ENCODE measurements at regions of chr3 and their contacts with region 1.

Region 1: DNA sequence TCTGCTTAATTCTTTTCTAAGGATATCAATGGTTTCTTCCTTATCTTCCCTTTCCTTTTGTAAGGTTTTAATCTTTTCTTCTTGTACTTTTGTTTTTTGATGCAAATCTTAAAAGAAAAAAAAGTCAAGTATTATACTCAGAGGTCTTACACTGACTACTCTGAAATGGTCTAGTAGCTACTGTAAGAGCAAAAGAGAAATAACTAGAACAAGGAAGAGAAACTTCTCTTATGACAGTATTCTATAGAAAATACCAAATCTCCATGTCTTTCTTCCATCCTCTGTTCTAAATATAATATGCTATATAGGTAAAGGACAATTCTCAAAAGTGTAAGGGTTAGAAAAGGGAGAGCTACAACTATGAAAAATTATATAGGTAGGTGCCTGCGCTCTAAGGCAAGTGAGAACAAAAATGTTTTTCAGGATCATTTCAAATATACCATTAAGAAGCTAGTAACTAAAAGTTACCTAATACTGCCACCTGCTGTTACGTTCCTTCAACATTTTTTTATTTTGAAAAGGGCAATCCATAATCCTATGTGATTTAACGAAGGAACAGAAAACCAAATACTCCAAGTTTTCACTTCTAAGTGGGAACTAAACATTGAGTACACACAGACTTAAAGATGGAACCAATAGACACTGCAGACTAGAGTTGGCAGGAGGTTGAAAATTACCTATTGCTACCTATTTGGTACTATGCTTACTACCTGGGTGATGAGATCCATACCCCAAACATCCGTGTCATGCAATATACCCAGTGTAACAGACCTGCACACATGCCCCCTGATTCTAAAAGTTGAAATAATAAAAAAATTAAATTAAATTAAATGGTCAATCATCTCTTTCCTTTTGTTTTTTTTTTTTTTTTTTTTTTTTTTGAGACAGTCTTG is 36.7 kb downstream of the CIP2A start:
- DNase-seq: no peak
- H3K4me3 ChIP-seq: no peak overlapping the region
- CTCF ChIP-seq: no peak
- POLR2A ChIP-seq: no peak

Region 2: GRCh38 chr3:108489771-108490170 is 62.7 kb before region 1 on chr3:
- intact Hi-C with region 1: loop called (anchors 5 kb)
- DNase-seq: peak in 1 of 2 donors; percentile 27
- H3K4me3 ChIP-seq: no peak overlapping the region
- CTCF ChIP-seq: no peak
- POLR2A ChIP-seq: no peak

Measured in lower leg skin (tissue), 4 donors.